Astrocyte of the cerebellum (primary cell): ENCODE measurements at regions of chr16 and their contacts with region 1.

Region 1: DNA sequence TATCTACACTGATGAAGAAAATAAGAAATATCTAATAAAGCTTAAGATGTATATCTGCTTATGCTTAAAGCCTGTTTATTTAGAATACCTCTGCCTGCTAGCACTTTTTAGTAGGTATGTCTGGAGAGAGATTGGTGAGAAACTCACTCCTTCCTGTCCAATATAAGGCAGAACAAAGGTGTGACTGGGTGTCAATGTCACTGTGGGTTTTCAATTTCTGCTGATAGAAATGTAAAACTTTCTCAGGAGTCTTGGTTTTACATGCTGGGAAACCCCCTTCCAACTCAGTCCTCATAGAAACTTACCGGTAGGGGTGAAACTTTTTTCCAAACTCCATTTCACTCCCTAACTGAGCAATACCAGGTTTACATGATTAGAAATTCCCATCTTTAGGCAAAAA is 17.8 kb upstream of the MPHOSPH6 start:
- DNase-seq: no peak
- H3K4me3 ChIP-seq: no peak overlapping the region
- CTCF ChIP-seq: no peak

Region 2: GRCh38 chr16:81855552-81856153 is 332.2 kb before region 1 on chr16:
- in situ Hi-C with region 1: no loop called
- DNase-seq: no peak
- H3K4me3 ChIP-seq: no peak overlapping the region
- CTCF ChIP-seq: no peak

Region 3: GRCh38 chr16:82152196-82153112 is 35.4 kb before region 1 on chr16:
- in situ Hi-C with region 1: loop called (anchors 5 kb)
- DNase-seq: no peak
- H3K4me3 ChIP-seq: no peak overlapping the region
- CTCF ChIP-seq: no peak